ENCODE measurements at regions of chr2 and their contacts with region 1.

Region 1: GRCh38 chr2:240149943-240150784 is 9.7 kb upstream of the OTOS start:
- DNase-seq: peak; percentile 88
- H3K4me3 ChIP-seq: no peak overlapping the region
- H3K27ac ChIP-seq: no peak overlapping the region
- H3K4me1 ChIP-seq: peaks cover 0 to 17% of the 10 kb centered on the region in 2 experiments; a peak in 1 of 4 replicates
- H3K27me3 ChIP-seq: no peaks in the 10 kb centered on the region
- CTCF ChIP-seq: peak; percentile 70
- EP300 ChIP-seq: no peak
- RAD21 ChIP-seq: peak; percentile 76

Region 2: DNA sequence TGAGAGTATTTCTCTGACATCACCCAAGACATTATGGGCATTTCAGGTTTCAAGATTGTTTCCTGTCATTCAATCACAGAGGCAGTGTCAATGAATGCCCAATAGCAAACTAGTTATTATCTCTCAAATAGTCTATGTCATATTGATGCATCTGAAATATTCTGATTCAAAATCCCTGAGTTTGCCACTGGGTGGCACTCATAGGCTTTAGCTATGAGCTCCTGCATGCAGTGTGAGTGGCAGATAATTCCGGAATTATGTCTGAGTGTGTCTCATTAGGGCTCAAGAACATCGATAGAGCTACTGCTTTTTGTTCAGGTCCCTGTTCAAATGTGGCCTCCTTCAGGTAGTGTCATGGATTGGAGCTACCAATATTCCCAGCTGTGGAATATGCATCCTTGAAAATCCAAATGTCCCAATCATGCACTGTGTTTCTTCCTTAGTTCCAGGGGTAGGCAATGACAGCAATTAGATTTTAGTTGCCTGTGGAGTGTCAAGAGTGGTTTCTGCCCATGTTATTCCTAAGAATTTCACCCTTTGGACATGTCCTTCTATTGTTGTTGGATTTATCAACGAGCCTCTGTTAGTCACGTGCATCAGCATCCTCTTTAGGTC is 89.1 kb before region 1 on chr2:
- CTCF ChIA-PET with region 1: interaction called, 291 read pairs
- POLR2A ChIA-PET with region 1: no interaction called
- DNase-seq: peak; percentile 63
- H3K4me3 ChIP-seq: no peak overlapping the region; a peak in 1 of 4 replicates
- H3K27ac ChIP-seq: no peak overlapping the region
- H3K4me1 ChIP-seq: no peaks in the 10 kb centered on the region; a peak in 1 of 4 replicates
- H3K27me3 ChIP-seq: peaks cover 16% of the 10 kb centered on the region; the same call in 1 of the 2 replicates
- CTCF ChIP-seq: peak; percentile 71
- EP300 ChIP-seq: no peak
- RAD21 ChIP-seq: peak; percentile 83

Region 3: GRCh38 chr2:240136013-240136670 is 14.0 kb before region 1 on chr2 and contains the start of gene COPS9:
- CTCF ChIA-PET with region 1: interaction called, 15 read pairs
- POLR2A ChIA-PET with region 1: no interaction called
- DNase-seq: peak; percentile 98
- H3K4me3 ChIP-seq: peak within 1 kb of the TSS; percentile 81 to 99
- H3K27ac ChIP-seq: peak within 1 kb of the TSS in 1 of 2 experiments; percentile 47; a peak in 2 of 4 replicates
- H3K4me1 ChIP-seq: peaks cover 11 to 18% of the 10 kb centered on the region in 2 experiments; a peak in 2 of 4 replicates
- H3K27me3 ChIP-seq: no peaks in the 10 kb centered on the region
- CTCF ChIP-seq: no peak
- EP300 ChIP-seq: no peak
- RAD21 ChIP-seq: no peak
- polyA plus RNA-seq, gene COPS9: 511 and 717 TPM in 2 replicates

Region 4: DNA sequence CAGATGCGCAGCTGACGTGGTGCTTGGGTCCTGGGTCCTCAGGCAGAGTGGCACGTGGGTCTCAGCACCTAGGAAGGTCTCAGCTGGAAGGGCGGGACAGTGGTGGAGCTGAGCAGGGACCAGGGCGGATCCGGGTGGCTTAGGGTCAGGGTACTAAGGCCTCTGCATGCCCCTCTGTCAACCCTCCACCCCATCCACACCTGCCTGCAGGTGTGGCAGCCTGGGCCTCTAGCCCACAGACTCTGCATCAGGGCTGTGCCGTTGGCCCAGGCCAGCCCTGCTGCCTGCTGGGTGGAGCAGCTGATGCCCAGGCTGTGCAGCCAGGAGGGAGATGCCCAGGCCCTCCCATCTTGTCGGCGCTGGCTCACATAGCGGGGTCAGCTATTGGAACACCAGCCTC is 14.9 kb after region 1 on chr2:
- CTCF ChIA-PET with region 1: interaction called, 14 read pairs
- POLR2A ChIA-PET with region 1: no interaction called
- DNase-seq: no peak
- H3K4me3 ChIP-seq: no peak overlapping the region
- H3K27ac ChIP-seq: no peak overlapping the region
- H3K4me1 ChIP-seq: no peaks in the 10 kb centered on the region
- H3K27me3 ChIP-seq: no peaks in the 10 kb centered on the region
- CTCF ChIP-seq: no peak
- EP300 ChIP-seq: no peak
- RAD21 ChIP-seq: no peak

Region 5: DNA sequence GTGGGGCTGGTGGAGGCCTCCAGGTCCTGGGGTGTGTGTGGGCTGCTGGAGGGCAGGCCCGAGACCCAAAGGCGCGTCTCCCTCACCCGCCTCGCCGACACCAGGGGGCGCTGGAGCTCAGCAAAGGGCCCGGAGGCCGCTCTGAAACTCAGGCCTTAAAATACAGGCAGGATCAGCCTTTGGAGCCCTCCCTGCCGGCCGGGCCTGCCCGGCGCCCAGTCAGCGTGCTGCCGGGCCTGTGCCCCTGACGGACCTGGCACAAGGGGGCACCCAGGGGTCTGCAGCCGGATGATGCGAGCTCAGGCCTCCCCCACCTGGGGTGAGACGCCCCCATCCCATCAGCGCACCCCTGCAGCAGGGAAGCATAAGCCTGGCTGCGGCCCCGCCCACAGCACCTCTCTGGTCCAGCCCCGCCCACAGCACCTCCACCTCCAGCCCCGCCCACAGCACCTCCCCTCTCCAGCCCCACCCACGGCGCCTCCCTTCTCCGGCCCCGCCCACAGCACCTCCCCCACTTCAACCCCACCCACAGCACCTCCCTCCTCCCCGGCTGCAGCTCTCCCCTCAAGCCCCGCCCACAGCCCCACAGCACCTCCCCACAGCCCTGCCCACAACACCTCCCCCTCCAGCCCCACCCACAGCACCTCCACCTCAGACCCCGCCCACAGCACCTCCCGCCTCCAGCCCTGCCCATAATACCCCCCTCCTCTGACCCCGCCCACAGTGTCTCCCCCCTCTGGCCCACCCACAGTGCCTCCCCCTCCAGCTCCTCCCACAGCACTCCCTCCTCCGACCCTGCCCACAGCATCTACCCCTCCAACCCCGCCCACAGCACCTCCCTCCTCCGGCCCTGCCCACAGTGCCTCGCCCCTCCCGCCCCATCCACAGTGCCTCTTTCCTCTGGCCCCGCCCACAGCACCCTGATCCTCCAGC is 83.1 kb after region 1 on chr2:
- CTCF ChIA-PET with region 1: interaction called, 16 read pairs
- POLR2A ChIA-PET with region 1: no interaction called
- DNase-seq: peak; percentile 90
- H3K4me3 ChIP-seq: peak overlapping the region; percentile 26 to 43; a peak in 2 of 4 replicates
- H3K27ac ChIP-seq: no peak overlapping the region
- H3K4me1 ChIP-seq: peaks cover 0 to 23% of the 10 kb centered on the region in 2 experiments; a peak in 1 of 4 replicates
- H3K27me3 ChIP-seq: no peaks in the 10 kb centered on the region
- CTCF ChIP-seq: peak; percentile 48
- EP300 ChIP-seq: no peak
- RAD21 ChIP-seq: peak; percentile 80

Region 6: DNA sequence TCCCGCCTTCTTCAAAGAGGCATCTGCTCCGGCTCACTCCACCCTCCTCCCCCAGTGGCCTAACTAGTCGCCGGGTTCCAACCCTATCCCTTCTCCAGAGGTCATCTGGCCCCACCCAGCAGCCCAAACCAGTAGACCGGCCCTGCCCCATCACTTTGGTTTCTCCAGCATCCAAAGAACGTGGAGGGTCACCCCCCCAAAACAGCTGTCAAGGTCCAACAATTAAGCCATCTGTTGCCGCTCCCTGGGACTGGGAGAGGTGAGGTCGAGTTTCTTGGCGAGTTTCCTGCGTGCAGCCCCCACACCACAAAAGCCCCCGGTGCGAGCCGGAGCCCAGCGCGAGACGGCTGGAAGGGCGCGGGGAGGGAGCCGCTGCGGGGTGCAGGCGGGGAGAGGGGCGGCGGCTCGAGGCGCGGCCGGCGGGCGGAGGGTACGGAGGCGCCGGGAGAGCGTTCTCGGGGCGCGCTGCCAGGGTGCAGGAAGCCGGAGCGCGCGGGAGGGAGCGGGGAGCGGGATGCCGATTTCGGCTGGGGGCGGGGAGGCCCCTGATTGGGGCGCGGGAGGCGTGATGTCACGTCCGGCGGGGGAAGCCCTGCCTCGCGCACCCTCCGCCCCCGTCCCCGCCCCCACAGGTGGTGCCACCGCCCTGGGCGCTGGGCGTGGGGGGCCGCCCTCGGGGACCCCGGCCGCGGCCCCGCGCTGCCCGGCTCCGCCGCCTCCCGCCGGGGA is 284.7 kb after region 1 on chr2:
- CTCF ChIA-PET with region 1: interaction called, 35 read pairs
- POLR2A ChIA-PET with region 1: interaction called, 8 read pairs
- DNase-seq: peak; percentile 99
- H3K4me3 ChIP-seq: peak overlapping the region; percentile 67 to 92
- H3K27ac ChIP-seq: peak overlapping the region; percentile 66 to 72
- H3K4me1 ChIP-seq: peaks cover 14 to 17% of the 10 kb centered on the region in 2 experiments; a peak in 2 of 4 replicates
- H3K27me3 ChIP-seq: no peaks in the 10 kb centered on the region
- CTCF ChIP-seq: no peak
- EP300 ChIP-seq: peak in 1 of 2 experiments; percentile 5; a peak in 1 of 4 replicates
- RAD21 ChIP-seq: no peak

Region 7: GRCh38 chr2:240604291-240604938 is 454.3 kb after region 1 on chr2:
- CTCF ChIA-PET with region 1: no interaction called
- POLR2A ChIA-PET with region 1: no interaction called
- DNase-seq: peak; percentile 99
- H3K4me3 ChIP-seq: no peak overlapping the region
- H3K27ac ChIP-seq: peak overlapping the region in 1 of 2 experiments; percentile 83; a peak in 2 of 4 replicates
- H3K4me1 ChIP-seq: peaks cover 0 to 15% of the 10 kb centered on the region in 2 experiments; a peak in 1 of 4 replicates
- H3K27me3 ChIP-seq: no peaks in the 10 kb centered on the region
- CTCF ChIP-seq: peak; percentile 48
- EP300 ChIP-seq: peak in 1 of 2 experiments; percentile 14; a peak in 1 of 4 replicates
- RAD21 ChIP-seq: peak; percentile 69

Measured in SK-N-SH (cell line).